A549 (cell line): ENCODE measurements at regions of chr19 and their contacts with region 1.

Region 1: GRCh38 chr19:31066385-31066784 is 282.9 kb downstream of the TSHZ3 start:
- DNase-seq: peak; percentile 64 to 84
- ATAC-seq: peak; percentile 79 to 89; a peak in 5 of 6 replicates
- H3K4me3 ChIP-seq: 0 out of 3 replicates have a peak overlapping the region, but pooled peaks have one; percentile 1
- H3K27ac ChIP-seq: peak overlapping the region; percentile 38 to 69; a peak in 5 of 6 replicates
- H3K4me1 ChIP-seq: peaks cover 16% of the 10 kb centered on the region
- CTCF ChIP-seq: no peak
- EP300 ChIP-seq: no peak
- POLR2A ChIP-seq: no peak
- RAD21 ChIP-seq: no peak

Region 2: DNA sequence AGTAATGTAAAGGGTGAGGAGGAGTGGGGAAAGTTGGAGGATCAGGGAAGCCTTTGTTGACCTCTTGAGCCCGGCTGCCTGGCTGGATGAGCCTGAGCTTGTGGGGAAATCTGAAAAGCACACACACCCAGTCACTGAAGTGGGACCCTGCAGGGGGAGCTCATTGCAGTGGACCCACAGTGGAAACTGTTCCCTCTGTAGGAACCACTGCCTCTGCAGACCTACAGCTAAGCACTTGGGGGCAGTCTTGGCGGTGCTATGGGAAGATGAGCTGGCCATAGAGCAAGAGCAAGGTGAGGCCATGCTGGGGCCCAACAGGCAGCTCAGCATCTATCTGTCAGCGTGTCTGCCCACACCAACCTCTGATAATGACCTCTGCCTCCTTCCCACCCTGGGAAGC is 12.0 kb before region 1 on chr19:
- CTCF ChIA-PET with region 1: interaction called, 11 read pairs
- POLR2A ChIA-PET with region 1: no interaction called
- DNase-seq: peak; percentile 28 to 65
- ATAC-seq: peak; percentile 88 to 94
- H3K4me3 ChIP-seq: no peak overlapping the region
- H3K27ac ChIP-seq: no peak overlapping the region
- H3K4me1 ChIP-seq: no peaks in the 10 kb centered on the region
- CTCF ChIP-seq: peak; percentile 36; the same call in 2 of the 3 replicates
- EP300 ChIP-seq: no peak
- POLR2A ChIP-seq: no peak
- RAD21 ChIP-seq: peak; percentile 62 to 75

Region 3: DNA sequence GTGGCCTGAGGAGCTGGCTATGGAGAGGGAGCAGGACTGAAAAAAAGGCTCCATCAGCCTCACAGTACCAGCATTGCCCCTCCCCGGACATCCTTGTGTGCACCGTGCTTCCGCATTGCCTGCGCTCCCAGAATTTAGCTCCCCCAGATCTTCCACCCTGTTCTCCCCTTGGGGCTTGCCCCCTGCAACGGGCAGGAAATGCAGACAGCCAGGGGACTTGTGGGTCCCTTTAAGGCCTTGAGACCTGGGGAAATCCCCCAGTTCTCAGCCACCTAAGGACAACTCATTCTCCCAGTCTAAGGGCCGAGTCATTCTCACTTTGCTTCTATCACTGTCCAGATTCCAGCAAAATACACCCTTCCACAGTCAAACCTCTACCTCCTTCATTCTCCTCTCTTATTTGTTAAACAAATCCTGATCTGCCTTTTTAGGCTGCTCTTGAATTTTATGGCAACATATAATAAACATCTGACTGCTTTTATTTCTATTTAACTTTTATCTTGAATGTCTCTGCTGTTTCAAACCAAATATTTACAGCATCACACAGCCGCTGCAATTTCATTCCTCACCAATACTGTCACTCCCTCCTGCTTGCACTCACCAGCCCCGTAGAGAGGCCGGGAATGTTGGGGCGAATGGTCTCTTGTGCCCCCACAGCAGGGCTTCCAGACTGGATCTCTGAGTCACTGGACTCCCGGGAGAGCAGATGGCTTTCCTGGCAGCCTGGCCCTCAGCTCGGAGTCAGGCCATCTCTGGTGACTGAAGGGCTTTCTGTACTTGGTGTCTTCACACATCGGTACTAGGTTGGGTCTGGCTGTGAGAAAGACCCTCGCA is 61.0 kb after region 1 on chr19:
- CTCF ChIA-PET with region 1: no interaction called
- POLR2A ChIA-PET with region 1: no interaction called
- DNase-seq: peak; percentile 67 to 82
- ATAC-seq: peak; percentile 89 to 91
- H3K4me3 ChIP-seq: no peak overlapping the region
- H3K27ac ChIP-seq: peak overlapping the region; percentile 80 to 87
- H3K4me1 ChIP-seq: peaks cover 25% of the 10 kb centered on the region
- CTCF ChIP-seq: no peak
- EP300 ChIP-seq: peak; percentile 75 to 81; a peak in 3 of 5 replicates
- POLR2A ChIP-seq: no peak
- RAD21 ChIP-seq: peak in 1 of 2 experiments; percentile 49; a peak in 2 of 5 replicates